ENCODE measurements at regions of chr9 and their contacts with region 1.

Region 1: DNA sequence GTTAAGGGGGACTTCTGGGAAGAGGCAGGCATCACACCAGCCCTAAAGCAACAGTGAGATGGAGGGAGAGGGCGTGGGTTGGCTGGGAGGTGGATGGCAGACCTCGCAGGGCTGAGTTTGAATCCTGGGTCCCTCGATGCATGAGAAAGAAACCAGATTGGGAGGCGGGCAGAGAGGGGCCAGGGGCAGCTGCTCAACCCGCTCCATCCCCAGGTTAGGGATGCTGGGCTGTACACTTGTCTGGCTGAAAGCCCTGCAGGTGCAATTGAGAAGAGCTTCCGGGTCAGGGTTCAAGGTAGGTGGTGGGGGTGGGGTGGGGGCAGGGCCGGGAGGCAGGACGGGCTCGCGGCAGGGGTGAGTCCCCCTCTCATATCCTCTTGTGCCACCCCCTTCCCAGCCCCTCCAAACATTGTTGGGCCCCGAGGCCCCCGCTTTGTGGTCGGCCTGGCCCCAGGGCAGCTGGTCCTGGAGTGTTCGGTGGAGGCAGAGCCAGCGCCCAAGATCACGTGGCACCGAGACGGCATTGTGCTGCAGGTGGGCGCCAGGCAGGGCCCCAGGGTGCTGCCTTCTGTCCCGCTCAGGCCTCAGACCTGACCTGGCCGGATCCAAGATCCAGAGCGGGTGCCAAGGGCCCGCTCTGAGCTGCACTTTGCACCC is 49.8 kb upstream of the ASS1 start:
- DNase-seq: no peak
- H3K4me3 ChIP-seq: no peak overlapping the region
- H3K27ac ChIP-seq: no peak overlapping the region
- H3K4me1 ChIP-seq: no peaks in the 10 kb centered on the region
- H3K27me3 ChIP-seq: no peaks in the 10 kb centered on the region
- CTCF ChIP-seq: no peak

Region 2: GRCh38 chr9:129816501-129817435 is 578.2 kb before region 1 on chr9:
- CTCF ChIA-PET with region 1: interaction called, 11 read pairs
- POLR2A ChIA-PET with region 1: no interaction called
- intact Hi-C with region 1: no loop called
- DNase-seq: no peak
- H3K4me3 ChIP-seq: no peak overlapping the region
- H3K27ac ChIP-seq: no peak overlapping the region
- H3K4me1 ChIP-seq: peaks cover 8% of the 10 kb centered on the region
- H3K27me3 ChIP-seq: no peaks in the 10 kb centered on the region
- CTCF ChIP-seq: no peak

Region 3: DNA sequence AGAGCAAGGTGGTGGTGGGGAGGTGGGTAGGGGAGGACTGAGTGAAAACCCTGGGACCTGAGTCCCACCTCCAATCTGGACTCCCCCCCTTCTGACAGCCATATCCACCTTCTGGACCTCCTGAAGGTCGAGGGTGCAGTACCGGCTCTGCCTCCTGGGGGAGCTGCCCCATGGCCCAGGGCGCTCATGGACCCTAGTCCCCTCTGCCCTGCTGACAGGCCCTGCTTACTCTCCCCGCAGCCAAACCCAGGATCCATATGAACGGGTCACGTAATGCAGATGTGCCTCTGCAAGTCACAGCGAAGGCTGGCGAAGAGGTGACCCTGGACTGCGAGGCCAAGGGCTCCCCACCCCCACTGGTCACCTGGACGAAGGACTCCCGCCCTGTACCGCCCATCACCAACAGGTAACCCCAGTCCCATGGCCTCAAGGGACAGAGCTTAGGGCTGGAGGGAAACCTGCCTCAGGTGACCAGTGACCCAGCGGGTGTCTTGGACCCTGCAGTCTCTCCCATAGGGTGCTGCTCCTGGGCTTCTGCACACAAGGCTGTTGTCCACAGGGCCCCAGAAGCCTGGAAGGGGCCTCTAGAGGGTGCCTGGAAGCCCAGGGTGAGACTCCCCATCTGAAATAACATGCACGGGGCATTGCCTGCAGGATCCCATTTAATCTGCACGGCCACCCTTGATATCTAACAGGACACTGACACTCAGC is 67.7 kb before region 1 on chr9:
- CTCF ChIA-PET with region 1: no interaction called
- POLR2A ChIA-PET with region 1: no interaction called
- intact Hi-C with region 1: no loop called
- DNase-seq: no peak
- H3K4me3 ChIP-seq: no peak overlapping the region
- H3K27ac ChIP-seq: no peak overlapping the region
- H3K4me1 ChIP-seq: no peaks in the 10 kb centered on the region
- H3K27me3 ChIP-seq: peaks cover 74% of the 10 kb centered on the region
- CTCF ChIP-seq: peak; percentile 49

Region 4: GRCh38 chr9:130348881-130349280 is 46.1 kb before region 1 on chr9:
- CTCF ChIA-PET with region 1: no interaction called
- POLR2A ChIA-PET with region 1: no interaction called
- intact Hi-C with region 1: loop called (anchors 1 kb)
- DNase-seq: no peak
- H3K4me3 ChIP-seq: no peak overlapping the region
- H3K27ac ChIP-seq: no peak overlapping the region
- H3K4me1 ChIP-seq: no peaks in the 10 kb centered on the region
- H3K27me3 ChIP-seq: no peaks in the 10 kb centered on the region
- CTCF ChIP-seq: no peak

Measured in A673 (cell line).